ENCODE measurements at regions of chr1 and their contacts with region 1.

Region 1: DNA sequence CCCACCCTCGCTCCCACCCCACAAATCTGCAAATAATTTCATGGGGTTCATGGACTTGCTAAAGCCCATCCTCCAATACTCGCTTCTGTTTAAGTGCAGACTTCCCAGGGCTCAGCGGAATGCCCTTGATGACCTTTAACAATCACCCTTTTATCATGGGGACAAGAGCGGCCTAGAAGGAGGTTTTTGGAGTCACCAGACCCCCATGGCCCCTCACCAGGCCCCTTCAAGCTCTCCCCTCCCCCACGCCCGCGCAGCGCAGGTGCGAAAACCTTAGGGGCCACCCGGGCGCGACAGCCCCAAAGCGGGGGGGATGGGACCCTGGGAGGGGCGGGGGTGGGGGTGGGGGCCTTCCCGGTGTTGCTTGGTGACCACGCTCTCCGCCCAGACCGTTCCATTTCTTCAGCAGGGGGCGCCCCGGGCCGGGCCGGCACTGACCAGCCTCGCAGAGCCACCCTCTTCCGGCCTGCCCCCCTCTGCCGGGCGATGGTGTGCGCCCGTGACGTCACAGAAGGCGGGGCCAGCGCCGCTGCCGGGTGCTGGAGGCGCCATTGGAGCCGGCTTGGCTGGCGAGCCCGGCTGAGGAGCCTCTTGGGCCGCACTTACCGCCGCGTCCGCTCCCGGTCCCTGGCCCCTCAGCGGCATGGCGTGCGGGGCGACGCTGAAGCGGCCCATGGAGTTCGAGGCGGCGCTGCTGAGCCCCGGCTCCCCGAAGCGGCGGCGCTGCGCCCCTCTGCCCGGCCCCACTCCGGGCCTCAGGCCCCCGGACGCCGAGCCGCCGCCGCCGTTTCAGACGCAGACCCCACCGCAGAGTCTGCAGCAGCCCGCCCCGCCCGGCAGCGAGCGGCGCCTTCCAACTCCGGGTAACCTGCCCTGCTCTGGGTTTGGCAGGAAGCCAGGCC is at the start of gene AKIRIN1:
- DNase-seq: peak; percentile 98 to 100 (median 99)
- ATAC-seq: peak; percentile 98
- H3K4me3 ChIP-seq: peak within 1 kb of the TSS; percentile 93 to 99
- H3K27ac ChIP-seq: peak within 1 kb of the TSS; percentile 80 to 97 (median 89)
- H3K4me1 ChIP-seq: peaks cover 20% of the 10 kb centered on the region
- H3K27me3 ChIP-seq: no peaks in the 10 kb centered on the region
- CTCF ChIP-seq: peak in 3 of 7 experiments; percentile 16 to 52 (median 38)
- POLR2A ChIP-seq: peak; percentile 84 to 91 (median 85)
- total RNA-seq, gene AKIRIN1: 17.8 to 20.5 TPM

Region 2: DNA sequence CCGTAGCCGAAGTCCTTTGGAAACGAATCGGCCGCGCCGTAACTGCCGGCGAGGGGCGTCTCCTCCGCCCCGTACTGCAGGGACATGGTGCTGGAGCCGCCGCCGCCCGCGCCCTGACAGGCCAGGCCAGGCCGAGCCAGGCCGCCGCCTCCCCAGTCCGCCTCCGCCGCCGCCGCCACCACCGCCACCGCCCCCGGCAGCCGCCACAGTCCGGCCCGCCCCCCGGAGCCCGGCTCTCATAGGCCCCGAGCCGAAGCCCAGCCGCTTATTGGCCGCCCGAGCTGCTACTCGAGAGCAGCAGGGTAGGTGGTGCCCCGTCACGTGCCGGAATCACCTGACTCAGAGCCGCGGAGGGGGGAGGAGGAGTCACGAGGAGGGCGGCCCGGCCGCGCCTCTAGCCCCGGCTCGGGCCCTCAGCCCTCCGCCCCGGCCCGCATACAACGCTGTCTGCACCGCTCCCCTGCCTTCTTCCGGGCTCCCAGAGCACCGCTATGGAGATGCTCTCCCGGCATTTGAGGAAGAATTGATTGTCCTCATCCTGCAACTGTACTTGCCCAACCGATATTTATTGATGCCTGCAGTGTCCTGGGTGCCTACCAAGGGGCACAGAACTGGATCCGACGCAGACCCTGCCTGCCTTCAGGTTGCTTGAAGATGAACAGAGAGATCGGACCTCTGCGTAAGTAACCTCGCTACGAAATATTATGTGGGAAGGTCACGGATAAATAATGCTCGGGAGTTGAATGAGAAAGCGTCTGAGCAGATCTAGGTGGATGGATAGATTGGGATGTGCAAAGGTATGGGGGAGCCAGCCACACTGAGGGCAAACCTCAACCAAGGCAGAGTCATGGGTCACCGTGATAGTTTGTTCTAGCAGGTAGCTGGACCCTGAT is 131.2 kb before region 1 on chr1 and contains the start of gene RRAGC:
- intact Hi-C with region 1: loop called (anchors 10 kb)
- DNase-seq: peak; percentile 99 to 100 (median 100)
- ATAC-seq: peak; percentile 99
- H3K4me3 ChIP-seq: peak within 1 kb of the TSS; percentile 76 to 78
- H3K27ac ChIP-seq: peak within 1 kb of the TSS; percentile 79 to 95 (median 82)
- H3K4me1 ChIP-seq: peaks cover 39% of the 10 kb centered on the region
- H3K27me3 ChIP-seq: no peaks in the 10 kb centered on the region
- CTCF ChIP-seq: no peak
- POLR2A ChIP-seq: peak; percentile 29 to 60 (median 50)
- total RNA-seq, gene RRAGC: 6.9 to 7.0 TPM

Region 3: DNA sequence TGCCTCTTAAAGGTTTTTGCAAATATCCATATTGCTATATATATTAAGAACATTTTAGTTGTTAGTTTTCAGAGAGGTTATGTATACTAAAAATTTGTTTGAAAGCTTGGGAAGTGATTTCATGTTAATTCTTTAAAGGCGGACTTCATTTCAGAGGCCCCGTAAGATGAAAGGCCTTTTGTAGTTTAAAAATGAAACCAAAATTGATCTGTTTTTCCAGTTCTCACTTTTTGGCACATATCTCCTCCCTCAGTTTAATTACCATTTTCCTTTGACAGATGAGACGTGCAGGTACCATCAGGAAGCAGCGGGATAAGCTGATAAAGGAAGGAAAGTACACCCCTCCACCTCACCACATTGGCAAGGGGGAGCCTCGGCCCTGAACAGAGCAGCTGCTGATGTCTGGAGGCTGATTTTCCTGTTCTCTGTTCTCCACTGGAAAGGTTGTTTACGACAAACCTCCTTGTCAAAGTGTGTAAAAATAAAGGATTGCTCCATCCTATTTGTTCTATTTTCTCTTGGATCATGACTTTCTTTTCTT is 43.2 kb after region 1 on chr1:
- intact Hi-C with region 1: no loop called
- DNase-seq: no peak
- ATAC-seq: peak; percentile 45
- H3K4me3 ChIP-seq: no peak overlapping the region
- H3K27ac ChIP-seq: peak overlapping the region in 2 of 4 donors; percentile 36 to 55
- H3K4me1 ChIP-seq: no peaks in the 10 kb centered on the region
- H3K27me3 ChIP-seq: no peaks in the 10 kb centered on the region
- CTCF ChIP-seq: no peak
- POLR2A ChIP-seq: no peak